Upper lobe of right lung (tissue), 1 donor: ENCODE measurements at regions of chr14 and their contacts with region 1.

Region 1: GRCh38 chr14:92783816-92784431 is 10.2 kb upstream of the GOLGA5 start:
- DNase-seq: no peak
- ATAC-seq: peak; percentile 78
- H3K4me3 ChIP-seq: no peak overlapping the region
- H3K27ac ChIP-seq: no peak overlapping the region
- H3K4me1 ChIP-seq: no peaks in the 10 kb centered on the region
- H3K27me3 ChIP-seq: no peaks in the 10 kb centered on the region
- CTCF ChIP-seq: peak; percentile 67

Region 2: GRCh38 chr14:92719890-92720323 is 64.0 kb before region 1 on chr14:
- intact Hi-C with region 1: loop called (anchors 10 kb)
- DNase-seq: no peak
- ATAC-seq: no peak
- H3K4me3 ChIP-seq: no peak overlapping the region
- H3K27ac ChIP-seq: peak overlapping the region; percentile 36
- H3K4me1 ChIP-seq: peaks cover 29% of the 10 kb centered on the region
- H3K27me3 ChIP-seq: no peaks in the 10 kb centered on the region
- CTCF ChIP-seq: no peak